Left cardiac atrium (tissue), 4 donors: ENCODE measurements at regions of chr12 and their contacts with region 1.

Region 1: GRCh38 chr12:55073043-55074022 is 52.9 kb upstream of the OR9K2 start:
- DNase-seq: peak; percentile 66
- ATAC-seq: peak; percentile 61 to 72

Region 2: GRCh38 chr12:54749191-54749818 is 324.0 kb before region 1 on chr12:
- intact Hi-C with region 1: loop called in 1 of 2 experiments (anchors 5 kb)
- DNase-seq: no peak
- ATAC-seq: peak; percentile 42 to 50

Region 3: GRCh38 chr12:54993161-54993835 is 80.0 kb before region 1 on chr12:
- intact Hi-C with region 1: loop called (anchors 2 to 5 kb)
- DNase-seq: no peak
- ATAC-seq: peak; percentile 75 to 81

Region 4: DNA sequence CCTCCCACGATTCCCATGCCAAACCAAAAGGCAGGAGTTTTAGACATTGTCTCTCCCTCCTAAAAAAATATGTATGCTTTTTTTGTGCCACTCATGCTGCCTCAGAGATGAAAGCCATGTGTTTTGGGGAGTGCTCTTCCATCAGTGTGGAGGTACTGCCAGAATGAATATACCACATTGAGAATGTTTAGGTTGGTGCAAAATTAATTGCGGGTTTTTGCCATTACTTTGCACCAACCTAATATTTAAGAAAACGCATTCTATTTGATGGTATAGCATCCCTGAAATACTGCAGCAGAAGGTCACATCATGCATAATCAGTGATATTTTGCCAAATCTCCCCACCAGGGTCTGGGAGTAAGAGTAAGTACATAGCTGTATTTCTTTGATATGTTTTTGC is 122.9 kb after region 1 on chr12:
- intact Hi-C with region 1: no loop called
- DNase-seq: no peak
- ATAC-seq: no peak